ENCODE measurements at regions of chr4 and their contacts with region 1.

Region 1: GRCh38 chr4:67700738-67701516 is at the start of gene UBA6:
- DNase-seq: peak; percentile 99
- H3K4me3 ChIP-seq: peak within 1 kb of the TSS; percentile 70 to 92 (median 80)
- H3K27ac ChIP-seq: peak within 1 kb of the TSS; percentile 79 to 92 (median 89)
- H3K4me1 ChIP-seq: peaks cover 13 to 31% (median 17%) of the 10 kb centered on the region in 4 donors
- H3K27me3 ChIP-seq: no peaks in the 10 kb centered on the region
- CTCF ChIP-seq: peak; percentile 37 to 43 (median 40)
- EP300 ChIP-seq: no peak
- POLR2A ChIP-seq: no peak
- total RNA-seq, gene UBA6: 18.8 to 40.9 (median 21.5) TPM

Region 2: DNA sequence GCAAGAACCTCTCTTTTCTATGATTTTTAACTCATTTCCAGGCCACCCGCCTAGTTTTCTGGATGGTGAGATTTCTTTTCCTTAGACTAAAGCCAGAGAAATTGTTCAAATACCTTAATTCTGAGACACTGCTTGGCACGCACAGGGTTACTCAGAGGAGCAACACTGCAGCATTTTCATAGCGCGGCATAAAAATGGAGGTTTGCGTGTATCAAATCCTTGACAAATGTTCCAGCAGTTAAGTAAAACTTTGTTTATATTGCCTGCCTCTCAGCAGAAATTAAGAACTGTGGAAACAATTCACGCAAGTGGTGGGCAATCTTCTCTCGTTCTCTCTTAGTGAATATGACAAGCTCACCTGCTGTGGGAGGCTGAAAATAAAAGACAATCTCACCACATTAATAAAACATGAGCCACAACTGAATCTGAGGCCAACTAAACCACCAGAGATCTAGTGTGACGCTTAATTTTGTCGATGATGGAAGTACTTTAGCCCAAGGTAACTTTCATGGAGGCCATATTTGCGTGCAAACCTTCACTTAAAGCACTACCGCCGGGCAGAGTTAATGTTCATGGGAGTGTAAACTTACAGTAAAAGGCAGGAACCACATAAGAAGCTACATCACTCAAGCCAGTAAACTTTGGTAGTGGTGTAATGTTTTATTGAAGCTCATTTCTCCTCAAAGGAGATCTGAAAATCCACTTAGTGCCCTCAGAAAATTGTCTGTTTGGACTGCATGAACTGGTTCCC is 1135.9 kb before region 1 on chr4:
- intact Hi-C with region 1: no loop called
- DNase-seq: no peak
- H3K4me3 ChIP-seq: no peak overlapping the region
- H3K27ac ChIP-seq: no peak overlapping the region
- H3K4me1 ChIP-seq: peaks cover 0 to 6% (median 0%) of the 10 kb centered on the region in 4 donors
- H3K27me3 ChIP-seq: no peaks in the 10 kb centered on the region
- CTCF ChIP-seq: no peak
- EP300 ChIP-seq: no peak
- POLR2A ChIP-seq: no peak

Region 3: DNA sequence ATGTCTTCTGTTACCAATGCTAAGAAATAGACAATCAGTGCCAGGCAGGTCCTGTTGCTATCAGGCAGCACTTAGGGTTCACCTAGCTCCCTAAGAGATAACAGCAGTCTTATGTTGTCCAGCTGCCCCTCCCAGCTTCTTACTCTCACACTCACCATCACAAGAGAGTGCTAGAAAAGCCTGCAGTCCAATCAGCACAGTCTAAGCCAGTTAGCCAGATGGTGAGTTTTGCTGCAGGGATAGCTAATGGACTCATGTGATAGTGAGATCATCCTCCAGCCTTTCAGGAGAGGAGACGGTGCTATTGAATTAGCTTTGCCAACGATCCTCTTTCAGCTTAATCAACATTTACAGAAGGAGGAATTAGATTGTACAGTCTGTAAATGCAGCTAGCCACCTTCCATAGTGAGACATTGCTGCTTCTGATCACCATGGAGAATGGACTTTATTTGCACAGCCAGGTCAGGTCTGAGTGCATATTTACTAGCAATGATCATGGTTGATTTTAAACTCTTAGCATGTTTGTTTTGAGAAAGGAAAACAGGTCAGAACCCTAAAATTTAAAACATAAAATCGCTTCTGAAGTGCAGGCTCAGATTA is 594.0 kb before region 1 on chr4:
- intact Hi-C with region 1: no loop called
- DNase-seq: no peak
- H3K4me3 ChIP-seq: no peak overlapping the region
- H3K27ac ChIP-seq: no peak overlapping the region
- H3K4me1 ChIP-seq: no peaks in the 10 kb centered on the region
- H3K27me3 ChIP-seq: no peaks in the 10 kb centered on the region
- CTCF ChIP-seq: no peak
- EP300 ChIP-seq: no peak
- POLR2A ChIP-seq: no peak

Region 4: GRCh38 chr4:67122029-67122428 is 578.9 kb before region 1 on chr4:
- intact Hi-C with region 1: no loop called
- DNase-seq: no peak
- H3K4me3 ChIP-seq: no peak overlapping the region
- H3K27ac ChIP-seq: no peak overlapping the region
- H3K4me1 ChIP-seq: no peaks in the 10 kb centered on the region
- H3K27me3 ChIP-seq: no peaks in the 10 kb centered on the region
- CTCF ChIP-seq: no peak
- EP300 ChIP-seq: no peak
- POLR2A ChIP-seq: no peak

Region 5: GRCh38 chr4:67327262-67328017 is 373.5 kb before region 1 on chr4:
- intact Hi-C with region 1: no loop called
- DNase-seq: no peak
- H3K4me3 ChIP-seq: no peak overlapping the region
- H3K27ac ChIP-seq: no peak overlapping the region
- H3K4me1 ChIP-seq: peaks cover 0 to 4% (median 0%) of the 10 kb centered on the region in 4 donors
- H3K27me3 ChIP-seq: peaks cover 0 to 11% (median 0%) of the 10 kb centered on the region in 4 donors
- CTCF ChIP-seq: peak; percentile 75 to 94 (median 83)
- EP300 ChIP-seq: no peak
- POLR2A ChIP-seq: no peak

Region 6: GRCh38 chr4:67545199-67546003 is 155.5 kb before region 1 on chr4 and contains the start of gene CENPC:
- intact Hi-C with region 1: loop called (anchors 5 kb)
- DNase-seq: peak; percentile 99
- H3K4me3 ChIP-seq: peak within 1 kb of the TSS; percentile 67 to 79 (median 73)
- H3K27ac ChIP-seq: peak within 1 kb of the TSS; percentile 84 to 92 (median 90)
- H3K4me1 ChIP-seq: peaks cover 8 to 34% (median 33%) of the 10 kb centered on the region in 4 donors
- H3K27me3 ChIP-seq: no peaks in the 10 kb centered on the region
- CTCF ChIP-seq: no peak
- EP300 ChIP-seq: no peak
- POLR2A ChIP-seq: peak; percentile 61
- total RNA-seq, gene CENPC: 14.5 to 26.2 (median 15.3) TPM